ENCODE measurements at regions of chr2 and their contacts with region 1.

Region 1: DNA sequence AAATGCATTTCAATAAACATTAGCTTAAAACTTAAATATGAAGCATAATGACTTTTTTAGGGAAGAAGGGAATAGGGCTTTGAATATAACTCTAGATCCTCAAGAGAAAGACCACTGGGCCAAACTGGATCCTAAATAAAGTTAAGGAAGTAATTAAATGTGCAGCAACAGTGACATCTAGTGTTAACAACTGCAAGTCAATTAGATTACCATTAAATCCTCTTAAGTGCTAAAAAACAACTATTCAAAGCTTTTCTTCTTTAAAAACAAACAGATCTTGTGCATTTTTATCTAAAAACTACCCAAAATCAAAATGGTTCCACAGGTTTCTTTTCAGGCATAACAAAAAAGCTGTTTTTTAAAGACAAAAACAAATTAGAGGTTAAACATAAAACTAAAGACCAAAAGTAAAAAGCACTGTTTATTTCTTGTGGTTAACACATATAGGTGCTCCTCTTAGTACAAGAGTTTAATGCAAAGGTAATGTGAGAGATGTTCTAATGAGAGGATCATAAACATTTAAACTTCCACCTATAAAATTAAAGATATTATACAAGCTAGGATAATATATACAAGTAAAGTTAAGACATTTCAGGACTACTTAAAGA is 111.4 kb downstream of the THADA start:
- DNase-seq: no peak
- ATAC-seq: peak in 1 of 2 donors; percentile 73
- H3K4me3 ChIP-seq: no peak overlapping the region
- H3K27ac ChIP-seq: no peak overlapping the region
- H3K4me1 ChIP-seq: peaks cover 36% of the 10 kb centered on the region
- H3K27me3 ChIP-seq: no peaks in the 10 kb centered on the region
- CTCF ChIP-seq: peak; percentile 68

Region 2: GRCh38 chr2:42959234-42960001 is 525.0 kb before region 1 on chr2:
- intact Hi-C with region 1: loop called (anchors 10 kb)
- DNase-seq: no peak
- ATAC-seq: peak; percentile 7 to 18
- H3K4me3 ChIP-seq: no peak overlapping the region
- H3K27ac ChIP-seq: peak overlapping the region; percentile 75
- H3K4me1 ChIP-seq: peaks cover 53% of the 10 kb centered on the region
- H3K27me3 ChIP-seq: no peaks in the 10 kb centered on the region
- CTCF ChIP-seq: no peak

Region 3: GRCh38 chr2:43024515-43025011 is 459.9 kb before region 1 on chr2:
- intact Hi-C with region 1: loop called (anchors 5 kb)
- DNase-seq: no peak
- ATAC-seq: peak; percentile 43 to 79
- H3K4me3 ChIP-seq: no peak overlapping the region
- H3K27ac ChIP-seq: no peak overlapping the region
- H3K4me1 ChIP-seq: peaks cover 19% of the 10 kb centered on the region
- H3K27me3 ChIP-seq: no peaks in the 10 kb centered on the region
- CTCF ChIP-seq: peak; percentile 61

Region 4: GRCh38 chr2:43226558-43226954 is 257.9 kb before region 1 on chr2 and contains the start of gene ZFP36L2:
- intact Hi-C with region 1: loop called (anchors 10 kb)
- DNase-seq: peak; percentile 98
- ATAC-seq: peak; percentile 86 to 92
- H3K4me3 ChIP-seq: peak within 1 kb of the TSS; percentile 95
- H3K27ac ChIP-seq: peak within 1 kb of the TSS; percentile 100
- H3K4me1 ChIP-seq: peaks cover 44% of the 10 kb centered on the region
- H3K27me3 ChIP-seq: no peaks in the 10 kb centered on the region
- CTCF ChIP-seq: no peak
- total RNA-seq, gene ZFP36L2: 136 TPM

Region 5: DNA sequence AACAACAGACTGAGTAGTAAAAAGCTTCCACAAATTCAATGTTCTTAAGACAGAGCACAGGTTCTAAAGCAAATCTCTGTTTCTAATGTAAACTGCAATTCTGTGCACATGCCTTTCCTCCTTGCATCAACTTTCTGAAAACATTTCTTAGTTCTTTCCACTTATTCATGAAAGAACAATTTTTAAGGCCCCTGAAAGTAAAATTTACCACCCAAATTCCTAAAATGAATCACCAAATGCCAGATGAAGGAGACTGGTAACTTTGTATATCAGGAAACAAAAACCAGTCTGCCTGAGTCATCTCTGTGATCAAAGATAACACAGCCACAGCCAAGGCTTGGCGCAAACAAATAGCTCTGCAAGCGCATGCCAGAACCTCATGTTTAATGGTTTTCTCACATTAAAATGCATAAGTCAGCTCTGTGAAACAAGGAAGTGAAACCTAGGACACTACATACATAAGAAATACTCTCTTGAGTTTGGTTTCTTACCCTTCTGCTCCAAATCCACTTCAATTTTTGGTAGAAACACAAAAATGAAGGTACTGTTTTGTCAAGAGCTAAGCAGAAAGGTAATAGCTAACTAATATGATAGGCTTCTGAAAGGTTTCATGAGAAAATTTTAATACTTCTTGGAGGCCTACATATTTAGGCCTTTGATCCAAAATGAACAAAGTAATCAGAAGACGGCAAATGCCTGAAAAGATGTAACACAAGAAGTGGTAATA is 58.0 kb before region 1 on chr2:
- intact Hi-C with region 1: no loop called
- DNase-seq: peak; percentile 57
- ATAC-seq: peak; percentile 85 to 86
- H3K4me3 ChIP-seq: no peak overlapping the region
- H3K27ac ChIP-seq: peak overlapping the region; percentile 39
- H3K4me1 ChIP-seq: peaks cover 26% of the 10 kb centered on the region
- H3K27me3 ChIP-seq: no peaks in the 10 kb centered on the region
- CTCF ChIP-seq: no peak

Measured in lower lobe of right lung (tissue), 2 donors.